ENCODE measurements at regions of chr20 and their contacts with region 1.

Region 1: GRCh38 chr20:61538183-61538770 is 286.2 kb downstream of the CDH4 start:
- DNase-seq: no peak

Region 2: GRCh38 chr20:61499859-61500554 is 38.3 kb before region 1 on chr20:
- intact Hi-C with region 1: loop called in 1 of 2 experiments (anchors 2 kb)
- DNase-seq: peak; percentile 59

Region 3: DNA sequence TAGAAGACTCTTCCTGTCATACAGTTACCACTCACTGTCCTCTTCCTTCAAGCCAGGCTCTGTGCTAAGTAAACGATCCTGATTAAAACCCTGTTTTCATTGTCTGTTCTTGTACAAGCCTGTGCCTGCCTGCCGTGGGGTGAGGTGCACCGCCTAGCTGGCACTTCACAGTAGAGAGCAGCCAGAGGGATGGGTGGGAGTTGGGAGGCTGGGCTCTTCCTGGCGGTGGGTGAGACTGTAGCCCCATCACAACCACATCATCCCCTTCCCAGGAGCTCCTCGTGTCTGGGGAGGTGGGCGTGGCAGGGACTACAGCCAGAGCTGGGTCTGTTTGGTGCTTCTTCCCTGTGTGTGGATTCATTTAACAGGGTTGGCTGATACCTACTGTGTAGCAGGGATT is 145.4 kb after region 1 on chr20:
- intact Hi-C with region 1: no loop called
- DNase-seq: no peak

Region 4: GRCh38 chr20:61951695-61952533 is 413.6 kb after region 1 on chr20:
- intact Hi-C with region 1: no loop called
- DNase-seq: peak; percentile 54

Measured in posterior vena cava (tissue), 2 donors.